ENCODE measurements at regions of chr16 and their contacts with region 1.

Region 1: DNA sequence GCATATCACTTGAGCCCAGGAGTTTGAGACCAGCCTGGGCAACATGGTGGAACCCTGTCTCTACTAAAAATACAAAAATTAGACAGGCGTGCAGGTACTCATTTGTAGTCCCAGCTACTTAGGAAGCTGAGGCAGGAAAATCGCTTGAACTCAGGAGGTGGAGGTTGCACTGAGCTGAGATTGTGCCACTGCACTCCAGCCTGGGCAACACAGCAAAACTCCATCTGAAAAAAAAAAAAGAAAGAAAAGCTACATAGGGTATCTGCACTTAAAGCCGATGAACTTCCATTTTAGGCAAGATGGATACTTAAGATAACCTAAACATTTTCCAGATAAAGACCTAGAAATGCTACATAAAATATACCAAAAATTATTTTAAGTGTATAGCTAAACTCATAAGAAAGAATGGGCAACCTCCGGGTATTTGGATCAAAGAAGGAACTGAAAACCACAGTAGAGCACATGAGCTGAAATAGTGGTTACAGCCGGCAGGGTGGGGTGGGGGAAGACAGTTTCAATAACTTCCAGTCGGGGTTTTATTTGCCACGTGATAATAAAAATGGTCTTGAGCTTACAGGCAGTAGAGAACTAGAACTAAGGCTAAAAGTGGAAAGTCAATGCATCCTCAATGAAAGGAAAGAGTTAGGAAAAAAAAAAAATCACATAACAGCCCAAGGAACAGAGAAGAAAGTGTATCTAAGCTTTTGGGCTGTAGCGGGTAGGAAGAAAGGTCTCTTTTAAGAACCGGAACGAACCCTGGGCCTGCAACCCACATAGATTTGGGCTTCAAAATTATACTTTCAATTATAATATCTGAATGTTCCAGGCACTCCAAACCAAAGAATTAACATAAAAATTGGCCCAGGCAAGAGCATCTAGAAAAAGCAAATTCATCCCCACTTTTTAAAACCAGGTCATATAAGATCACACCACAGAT is 53.1 kb downstream of the CFDP1 start:
- DNase-seq: peak; percentile 49
- ATAC-seq: peak; percentile 53
- H3K4me3 Mint-ChIP-seq: no peak overlapping the region
- H3K27ac Mint-ChIP-seq: no peak overlapping the region
- H3K4me1 Mint-ChIP-seq: peaks cover 49% of the 10 kb centered on the region
- H3K27me3 Mint-ChIP-seq: peaks cover 12% of the 10 kb centered on the region

Region 2: GRCh38 chr16:75198135-75198600 is 182.0 kb before region 1 on chr16:
- CTCF ChIA-PET with region 1: interaction called, 61 read pairs
- POLR2A ChIA-PET with region 1: no interaction called
- intact Hi-C with region 1: loop called (anchors 1 kb)
- DNase-seq: no peak
- ATAC-seq: no peak
- H3K4me3 Mint-ChIP-seq: no peak overlapping the region
- H3K27ac Mint-ChIP-seq: no peak overlapping the region
- H3K4me1 Mint-ChIP-seq: peaks cover 8% of the 10 kb centered on the region
- H3K27me3 Mint-ChIP-seq: peaks cover 10% of the 10 kb centered on the region

Region 3: GRCh38 chr16:75305364-75306098 is 74.6 kb before region 1 on chr16:
- CTCF ChIA-PET with region 1: interaction called, 10 read pairs
- POLR2A ChIA-PET with region 1: no interaction called
- intact Hi-C with region 1: loop called (anchors 2 to 5 kb)
- DNase-seq: peak; percentile 87
- ATAC-seq: peak; percentile 96
- H3K4me3 Mint-ChIP-seq: no peak overlapping the region
- H3K27ac Mint-ChIP-seq: peak overlapping the region; percentile 84
- H3K4me1 Mint-ChIP-seq: peaks cover 29% of the 10 kb centered on the region
- H3K27me3 Mint-ChIP-seq: no peaks in the 10 kb centered on the region

Region 4: GRCh38 chr16:75337430-75337829 is 42.7 kb before region 1 on chr16:
- CTCF ChIA-PET with region 1: interaction called, 4 read pairs
- POLR2A ChIA-PET with region 1: no interaction called
- intact Hi-C with region 1: loop called in 1 of 2 experiments (anchors 5 kb)
- DNase-seq: no peak
- ATAC-seq: no peak
- H3K4me3 Mint-ChIP-seq: no peak overlapping the region
- H3K27ac Mint-ChIP-seq: no peak overlapping the region
- H3K4me1 Mint-ChIP-seq: peaks cover 15% of the 10 kb centered on the region
- H3K27me3 Mint-ChIP-seq: no peaks in the 10 kb centered on the region

Region 5: DNA sequence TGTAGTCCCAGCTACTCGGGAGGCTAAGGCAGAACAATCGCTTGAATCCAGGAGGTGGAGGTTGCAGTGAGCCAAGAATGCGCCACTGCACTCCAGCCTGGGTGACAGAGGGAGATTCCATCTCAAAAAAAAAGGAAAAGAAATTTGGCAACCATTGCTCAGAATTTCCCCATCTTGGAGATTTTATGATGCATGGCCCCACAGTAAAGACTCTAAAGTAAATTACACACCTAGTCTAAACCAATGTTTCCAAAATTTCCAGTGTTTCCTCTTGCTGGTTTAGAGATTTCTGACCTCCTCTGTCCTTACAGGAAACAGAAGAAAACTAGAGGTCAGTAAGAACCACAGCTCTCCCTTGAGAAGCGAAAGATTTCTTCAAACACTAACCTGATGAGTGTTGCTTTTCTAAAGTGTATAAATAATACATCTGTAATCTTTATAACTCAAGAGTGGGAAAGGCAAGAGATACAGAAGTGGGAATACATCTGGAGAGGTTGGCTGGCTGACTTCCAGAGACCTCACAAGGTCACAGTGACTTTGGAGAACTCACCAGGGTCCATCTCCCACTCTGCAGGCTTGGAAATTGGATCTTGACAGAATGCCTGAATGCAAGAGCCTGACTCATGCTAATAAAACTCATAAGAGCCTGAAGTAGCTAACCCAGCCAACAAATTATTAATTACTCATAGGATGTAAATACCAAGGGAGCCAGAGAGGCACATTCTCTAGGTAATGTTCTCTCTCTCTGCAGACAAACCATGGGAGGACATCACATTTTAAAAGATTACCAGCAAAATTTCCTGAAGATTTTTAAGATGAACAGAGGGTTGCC is 234.1 kb after region 1 on chr16:
- CTCF ChIA-PET with region 1: no interaction called
- POLR2A ChIA-PET with region 1: interaction called, 4 read pairs
- intact Hi-C with region 1: loop called in 1 of 2 experiments (anchors 2 kb)
- DNase-seq: no peak
- ATAC-seq: no peak
- H3K4me3 Mint-ChIP-seq: no peak overlapping the region
- H3K27ac Mint-ChIP-seq: no peak overlapping the region
- H3K4me1 Mint-ChIP-seq: peaks cover 23% of the 10 kb centered on the region
- H3K27me3 Mint-ChIP-seq: no peaks in the 10 kb centered on the region